ENCODE measurements at regions of chr19 and their contacts with region 1.

Region 1: DNA sequence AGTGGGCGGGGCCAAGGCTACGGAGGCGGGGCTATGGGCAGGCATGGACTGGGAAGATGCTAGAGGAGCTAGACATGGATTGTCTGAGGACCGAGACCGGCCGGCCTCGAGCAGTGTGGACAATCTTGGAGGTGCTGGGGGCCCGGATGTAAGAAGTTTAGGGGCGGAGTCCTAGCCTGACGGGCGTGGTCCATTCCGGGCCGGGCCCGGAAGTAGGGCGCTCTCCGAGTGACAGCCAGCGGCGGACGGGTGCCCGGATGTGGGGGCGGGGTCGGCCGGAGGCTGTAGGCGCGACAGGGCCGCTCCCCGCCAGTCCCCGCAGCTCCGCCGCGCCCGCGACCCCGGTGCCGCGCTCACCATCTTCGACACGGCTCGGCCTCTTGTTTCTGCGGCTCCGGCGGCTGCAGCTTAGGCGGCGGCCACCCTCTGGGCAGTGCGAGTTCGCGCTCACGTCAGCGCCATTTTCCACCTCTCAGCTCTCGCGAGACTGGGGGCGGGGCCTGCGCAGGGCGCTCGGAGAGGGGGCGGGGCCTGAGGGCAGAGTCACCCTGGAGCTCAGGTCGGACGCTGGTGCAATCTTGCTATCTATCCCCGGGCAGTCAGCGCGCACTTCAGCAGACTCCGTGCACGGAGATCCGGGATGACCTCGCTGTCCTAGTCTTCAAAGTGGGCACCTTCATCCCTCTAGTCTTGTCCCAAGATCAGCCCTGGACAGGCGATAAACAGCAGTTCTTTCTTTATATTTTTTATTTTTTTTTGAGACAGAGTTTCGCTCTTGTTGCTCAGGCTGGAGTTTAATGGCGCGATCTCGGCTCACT is at the start of gene ZNF414:
- DNase-seq: peak; percentile 98
- H3K4me3 Mint-ChIP-seq: peak within 1 kb of the TSS; percentile 85
- H3K27ac Mint-ChIP-seq: peak within 1 kb of the TSS; percentile 99
- H3K4me1 Mint-ChIP-seq: peaks cover 15% of the 10 kb centered on the region
- H3K27me3 Mint-ChIP-seq: no peaks in the 10 kb centered on the region
- CTCF ChIP-seq: no peak
- total RNA-seq, gene ZNF414: 16.3 and 27.2 TPM in 2 replicates

Region 2: DNA sequence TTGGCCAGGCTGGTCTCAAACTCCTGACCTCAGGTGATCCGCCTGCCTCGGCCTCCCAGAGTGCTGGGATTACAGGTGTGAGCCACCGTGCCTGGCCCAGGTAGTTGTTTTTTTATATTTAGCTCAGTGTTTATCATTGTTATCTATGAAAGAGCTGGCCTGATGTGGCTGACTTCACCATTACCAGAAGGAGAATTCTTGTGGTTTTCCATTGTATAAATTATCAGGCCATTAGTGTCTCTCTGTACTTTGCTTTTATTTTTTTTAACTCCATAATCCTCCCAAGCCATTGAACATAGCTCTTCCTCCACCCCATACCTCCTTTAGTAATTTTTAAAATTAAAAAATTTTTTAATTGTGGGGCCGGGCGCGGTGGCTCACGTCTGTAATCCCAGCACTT is 280.5 kb before region 1 on chr19:
- CTCF ChIA-PET with region 1: no interaction called
- POLR2A ChIA-PET with region 1: no interaction called
- intact Hi-C with region 1: no loop called
- DNase-seq: no peak
- H3K4me3 Mint-ChIP-seq: no peak overlapping the region
- H3K27ac Mint-ChIP-seq: no peak overlapping the region
- H3K4me1 Mint-ChIP-seq: peaks cover 6% of the 10 kb centered on the region
- H3K27me3 Mint-ChIP-seq: no peaks in the 10 kb centered on the region
- CTCF ChIP-seq: no peak

Region 3: GRCh38 chr19:8526345-8527067 is 12.6 kb after region 1 on chr19:
- CTCF ChIA-PET with region 1: interaction called, 4 read pairs
- POLR2A ChIA-PET with region 1: interaction called, 40 read pairs
- intact Hi-C with region 1: no loop called
- DNase-seq: peak; percentile 94
- H3K4me3 Mint-ChIP-seq: no peak overlapping the region
- H3K27ac Mint-ChIP-seq: no peak overlapping the region
- H3K4me1 Mint-ChIP-seq: no peaks in the 10 kb centered on the region
- H3K27me3 Mint-ChIP-seq: no peaks in the 10 kb centered on the region
- CTCF ChIP-seq: no peak

Measured in MCF 10A (cell line).